Lower leg skin (tissue), 4 donors: ENCODE measurements at regions of chrX and their contacts with region 1.

Region 1: GRCh38 chrX:10811111-10811510 is 190.7 kb upstream of the MID1 start:
- DNase-seq: no peak
- H3K4me3 ChIP-seq: no peak overlapping the region
- CTCF ChIP-seq: no peak
- POLR2A ChIP-seq: no peak

Region 2: DNA sequence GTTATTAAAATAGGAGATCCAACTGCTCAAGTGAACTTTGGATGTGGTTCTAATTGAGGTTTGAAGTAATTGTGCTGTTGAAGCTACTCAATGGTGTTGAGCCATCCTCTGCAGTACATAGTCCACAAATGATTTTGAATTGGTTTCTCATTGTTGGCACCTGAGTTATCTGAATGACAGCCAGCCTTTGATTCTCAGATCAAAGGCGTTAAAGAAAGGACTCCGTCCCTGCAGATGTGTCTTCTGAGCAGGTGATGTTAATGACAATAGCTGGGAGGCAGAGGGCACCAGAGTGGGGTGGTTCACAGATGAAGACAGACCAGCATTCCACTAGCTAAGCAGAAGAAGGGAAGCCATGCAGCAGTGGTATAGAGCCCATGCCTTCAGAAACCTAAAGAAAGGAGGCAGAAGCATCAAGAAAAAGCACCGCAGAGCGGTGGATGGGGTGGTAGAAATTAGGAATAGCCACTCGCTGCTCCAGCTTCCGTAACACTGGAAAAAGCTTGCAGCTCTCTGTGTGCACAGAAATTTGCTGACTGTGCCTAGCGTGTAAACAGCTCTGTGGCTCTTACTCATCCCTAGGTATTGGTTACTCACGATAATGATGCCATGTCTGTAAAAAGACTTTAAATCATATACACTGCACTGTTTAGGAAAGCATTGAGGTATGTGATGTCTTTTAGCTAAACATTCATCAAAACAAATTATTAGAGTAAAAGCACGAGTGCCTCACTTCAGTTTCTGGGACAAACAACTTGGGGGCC is 733.5 kb before region 1 on chrX:
- intact Hi-C with region 1: no loop called
- DNase-seq: peak in 1 of 2 donors; percentile 36
- H3K4me3 ChIP-seq: no peak overlapping the region
- CTCF ChIP-seq: no peak
- POLR2A ChIP-seq: no peak

Region 3: DNA sequence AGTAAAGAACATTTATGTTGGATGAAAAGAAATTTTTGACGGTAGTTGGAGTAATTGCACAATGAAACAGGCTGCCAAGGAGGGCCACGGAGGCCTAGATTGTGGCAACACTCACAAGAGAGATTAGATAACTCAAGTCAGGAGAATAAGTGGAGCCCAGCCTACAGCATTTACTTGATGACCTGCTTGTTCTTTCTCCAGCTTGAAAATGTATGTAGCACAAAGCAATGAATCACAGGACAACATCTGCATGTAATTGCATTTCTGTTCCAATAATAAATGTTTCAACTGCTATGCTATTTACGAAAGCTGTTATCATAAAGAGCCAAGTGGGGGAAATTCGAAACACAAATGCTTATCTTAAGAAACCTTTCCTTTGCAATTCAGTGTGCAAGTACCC is 30.5 kb after region 1 on chrX:
- intact Hi-C with region 1: no loop called
- DNase-seq: no peak
- H3K4me3 ChIP-seq: no peak overlapping the region
- CTCF ChIP-seq: no peak
- POLR2A ChIP-seq: no peak

Region 4: GRCh38 chrX:10854594-10854993 is 43.5 kb after region 1 on chrX:
- intact Hi-C with region 1: loop called (anchors 2 kb)
- DNase-seq: no peak
- H3K4me3 ChIP-seq: no peak overlapping the region
- CTCF ChIP-seq: no peak
- POLR2A ChIP-seq: no peak

Region 5: GRCh38 chrX:12308420-12308819 is 1497.3 kb after region 1 on chrX:
- intact Hi-C with region 1: loop called (anchors 5 kb)
- DNase-seq: no peak
- H3K4me3 ChIP-seq: no peak overlapping the region
- CTCF ChIP-seq: no peak
- POLR2A ChIP-seq: no peak